ENCODE measurements at regions of chr2 and their contacts with region 1.

Region 1: GRCh38 chr2:44197816-44198215 is 29.1 kb downstream of the PPM1B start:
- DNase-seq: no peak
- ATAC-seq: no peak
- H3K4me3 ChIP-seq: no peak overlapping the region
- H3K4me3 Mint-ChIP-seq: no peak overlapping the region
- H3K27ac ChIP-seq: no peak overlapping the region
- H3K27ac Mint-ChIP-seq: no peak overlapping the region
- H3K4me1 ChIP-seq: peaks cover 13% of the 10 kb centered on the region
- H3K4me1 Mint-ChIP-seq: peaks cover 61% of the 10 kb centered on the region
- H3K27me3 ChIP-seq: no peaks in the 10 kb centered on the region
- H3K27me3 Mint-ChIP-seq: no peaks in the 10 kb centered on the region
- CTCF ChIP-seq: no peak

Region 2: GRCh38 chr2:45806563-45807358 is 1608.9 kb after region 1 on chr2:
- CTCF ChIA-PET with region 1: no interaction called
- POLR2A ChIA-PET with region 1: no interaction called
- intact Hi-C with region 1: loop called in 1 of 2 experiments (anchors 5 kb)
- DNase-seq: no peak
- ATAC-seq: no peak
- H3K4me3 ChIP-seq: no peak overlapping the region
- H3K4me3 Mint-ChIP-seq: no peak overlapping the region
- H3K27ac ChIP-seq: no peak overlapping the region
- H3K27ac Mint-ChIP-seq: no peak overlapping the region
- H3K4me1 ChIP-seq: no peaks in the 10 kb centered on the region
- H3K4me1 Mint-ChIP-seq: no peaks in the 10 kb centered on the region
- H3K27me3 ChIP-seq: no peaks in the 10 kb centered on the region
- H3K27me3 Mint-ChIP-seq: no peaks in the 10 kb centered on the region
- CTCF ChIP-seq: no peak